MCF 10A (cell line): ENCODE measurements at regions of chr4 and their contacts with region 1.

Region 1: GRCh38 chr4:138209094-138209493 is 33.1 kb downstream of the SLC7A11 start:
- DNase-seq: peak; percentile 75
- H3K4me3 Mint-ChIP-seq: no peak overlapping the region
- H3K27ac Mint-ChIP-seq: peak overlapping the region; percentile 49
- H3K4me1 Mint-ChIP-seq: peaks cover 25% of the 10 kb centered on the region
- H3K27me3 Mint-ChIP-seq: no peaks in the 10 kb centered on the region
- CTCF ChIP-seq: no peak

Region 2: DNA sequence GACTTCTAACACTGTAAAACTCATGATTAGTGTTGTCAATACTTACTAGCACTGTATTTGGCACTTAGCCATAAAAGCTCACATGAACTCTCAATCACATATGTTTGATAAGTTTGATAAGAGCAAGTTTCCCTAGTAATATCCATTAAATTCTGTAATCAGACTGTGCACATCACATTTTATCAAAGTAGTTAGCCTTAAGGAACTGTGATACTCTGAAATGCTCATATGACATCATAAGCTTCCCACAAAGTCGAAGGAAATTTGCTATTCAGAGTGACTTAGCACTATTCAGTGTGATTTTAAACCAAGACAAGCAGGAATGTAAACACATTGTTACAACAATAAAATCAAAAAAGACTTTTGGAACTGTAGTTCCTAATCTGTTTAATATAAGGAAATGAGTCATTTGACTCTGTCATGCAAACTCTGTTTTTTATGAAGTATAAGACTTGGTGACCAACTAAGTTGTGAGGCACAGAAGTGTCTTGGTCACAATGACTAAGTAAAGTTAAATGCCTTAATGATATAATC is 26.4 kb after region 1 on chr4:
- CTCF ChIA-PET with region 1: interaction called, 7 read pairs
- POLR2A ChIA-PET with region 1: interaction called, 31 read pairs
- intact Hi-C with region 1: no loop called
- DNase-seq: peak; percentile 67
- H3K4me3 Mint-ChIP-seq: peak overlapping the region; percentile 30
- H3K27ac Mint-ChIP-seq: peak overlapping the region; percentile 74
- H3K4me1 Mint-ChIP-seq: peaks cover 30% of the 10 kb centered on the region
- H3K27me3 Mint-ChIP-seq: no peaks in the 10 kb centered on the region
- CTCF ChIP-seq: no peak